H1 (cell line): ENCODE measurements at regions of chr2 and their contacts with region 1.

Region 1: DNA sequence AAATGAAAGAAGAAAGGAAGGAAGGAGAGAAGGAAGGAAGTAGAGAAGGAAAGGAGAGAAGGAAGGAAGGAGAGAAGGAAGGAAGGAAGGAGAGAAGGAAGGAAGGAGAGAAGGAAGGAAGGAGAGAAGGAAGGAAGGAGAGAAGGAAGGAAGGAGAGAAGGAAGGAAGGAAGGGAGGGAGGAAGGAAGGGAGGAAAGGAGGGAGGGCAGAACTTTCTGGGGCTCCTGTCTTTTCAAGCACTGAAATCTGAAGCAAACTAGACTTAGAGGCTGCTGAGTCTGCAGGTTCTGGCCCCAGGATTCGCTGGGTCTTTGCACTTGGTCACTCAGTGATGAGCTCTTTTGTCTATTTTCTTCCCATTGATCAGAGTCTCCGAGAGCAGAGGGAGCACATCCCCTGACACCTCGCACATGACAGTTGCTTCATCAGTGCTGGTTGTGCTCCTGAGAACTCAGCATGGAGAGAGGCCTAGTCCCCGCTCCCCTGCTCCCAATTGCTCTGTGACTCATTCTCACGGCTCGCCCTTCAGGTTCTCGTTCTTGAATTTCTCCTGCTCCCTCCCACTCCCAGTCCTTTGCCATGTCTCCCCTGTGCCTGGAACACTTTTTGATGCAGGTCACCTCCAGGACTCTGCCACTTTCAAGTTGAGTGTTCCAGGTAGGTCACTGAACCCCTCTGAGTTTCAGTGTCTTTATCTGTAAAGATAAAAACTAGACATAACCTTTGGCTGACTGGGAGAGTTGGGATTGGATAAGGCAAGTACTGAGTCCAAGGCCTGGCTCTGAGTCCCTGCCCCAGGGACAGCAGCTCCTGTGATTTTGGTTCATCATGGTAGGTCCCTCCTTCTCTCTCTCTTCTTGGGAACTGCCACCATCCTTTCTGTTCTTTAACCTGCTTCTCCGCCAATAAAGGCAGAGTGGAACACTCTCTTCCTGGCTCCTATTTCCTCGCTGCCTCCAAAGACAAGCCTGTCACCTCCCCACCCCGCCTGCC is 55.2 kb downstream of the TNP1 start:
- DNase-seq: no peak
- H3K4me3 ChIP-seq: no peak overlapping the region
- H3K27ac ChIP-seq: no peak overlapping the region
- H3K4me1 ChIP-seq: no peaks in the 10 kb centered on the region
- H3K27me3 ChIP-seq: no peaks in the 10 kb centered on the region
- CTCF ChIP-seq: no peak
- EP300 ChIP-seq: no peak
- POLR2A ChIP-seq: no peak
- RAD21 ChIP-seq: no peak

Region 2: GRCh38 chr2:216792222-216793021 is 12.2 kb before region 1 on chr2:
- CTCF ChIA-PET with region 1: interaction called, 11 read pairs
- POLR2A ChIA-PET with region 1: interaction called, 3 read pairs
- DNase-seq: no peak
- H3K4me3 ChIP-seq: no peak overlapping the region
- H3K27ac ChIP-seq: no peak overlapping the region
- H3K4me1 ChIP-seq: peaks cover 0 to 4% (median 2%) of the 10 kb centered on the region in 4 experiments; a peak in 3 of 7 replicates
- H3K27me3 ChIP-seq: no peaks in the 10 kb centered on the region; a peak in 1 of 7 replicates
- CTCF ChIP-seq: peak in 1 of 3 experiments; percentile 14; a peak in 1 of 4 replicates
- EP300 ChIP-seq: no peak
- POLR2A ChIP-seq: no peak
- RAD21 ChIP-seq: no peak